ENCODE measurements at regions of chr19 and their contacts with region 1.

Region 1: GRCh38 chr19:4991996-4992698 is 23.2 kb downstream of the KDM4B start:
- DNase-seq: no peak
- H3K4me3 ChIP-seq: no peak overlapping the region
- H3K27ac ChIP-seq: no peak overlapping the region
- H3K4me1 ChIP-seq: no peaks in the 10 kb centered on the region
- H3K27me3 ChIP-seq: no peaks in the 10 kb centered on the region
- CTCF ChIP-seq: no peak

Region 2: GRCh38 chr19:4976401-4977298 is 15.5 kb before region 1 on chr19:
- CTCF ChIA-PET with region 1: no interaction called
- POLR2A ChIA-PET with region 1: no interaction called
- intact Hi-C with region 1: loop called (anchors 1 kb)
- DNase-seq: peak; percentile 51
- H3K4me3 ChIP-seq: no peak overlapping the region
- H3K27ac ChIP-seq: no peak overlapping the region
- H3K4me1 ChIP-seq: peaks cover under 1% of the 10 kb centered on the region
- H3K27me3 ChIP-seq: no peaks in the 10 kb centered on the region
- CTCF ChIP-seq: peak; percentile 49; the same call in 1 of the 2 replicates

Region 3: GRCh38 chr19:5271141-5271540 is 279.0 kb after region 1 on chr19:
- CTCF ChIA-PET with region 1: no interaction called
- POLR2A ChIA-PET with region 1: no interaction called
- intact Hi-C with region 1: no loop called
- DNase-seq: peak; percentile 50
- H3K4me3 ChIP-seq: no peak overlapping the region
- H3K27ac ChIP-seq: no peak overlapping the region
- H3K4me1 ChIP-seq: no peaks in the 10 kb centered on the region
- H3K27me3 ChIP-seq: no peaks in the 10 kb centered on the region
- CTCF ChIP-seq: peak; percentile 24; the same call in 1 of the 2 replicates